Caco-2 (cell line): ENCODE measurements at regions of chr10 and their contacts with region 1.

Region 1: DNA sequence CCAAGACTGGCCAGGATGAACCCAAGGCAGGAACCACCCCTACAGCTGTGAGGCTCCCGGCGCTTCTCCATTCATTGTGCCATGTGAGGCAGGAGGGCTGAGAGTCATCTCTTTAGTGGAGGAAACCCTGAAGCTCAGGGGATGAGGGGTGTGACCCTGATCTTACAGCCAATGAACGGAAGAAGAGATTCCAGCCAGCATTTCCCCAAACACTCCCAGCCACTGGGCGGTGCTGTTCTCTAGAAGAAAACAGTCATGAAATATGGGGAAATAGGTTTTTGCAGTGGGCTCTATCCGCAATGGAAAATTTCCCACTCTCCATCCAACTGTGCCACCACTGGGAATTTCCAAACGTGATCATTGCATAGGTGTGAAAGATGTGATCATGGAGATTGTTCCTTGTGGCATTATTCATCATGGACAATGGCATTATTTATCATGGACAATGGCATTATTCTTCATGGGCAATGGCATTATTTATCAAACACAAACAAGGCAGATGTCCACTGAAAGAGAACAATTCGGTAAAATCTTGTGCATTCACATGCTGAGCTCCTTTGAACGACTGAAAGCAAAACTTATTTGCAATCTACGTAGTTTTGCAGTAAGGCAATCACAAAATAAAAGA is 14.0 kb upstream of the SLC18A2 start:
- DNase-seq: peak in 1 of 2 experiments; percentile 52
- H3K4me3 ChIP-seq: no peak overlapping the region
- H3K4me3 Mint-ChIP-seq: no peak overlapping the region
- H3K27ac Mint-ChIP-seq: no peak overlapping the region
- H3K4me1 ChIP-seq: no peaks in the 10 kb centered on the region
- H3K4me1 Mint-ChIP-seq: no peaks in the 10 kb centered on the region
- H3K27me3 ChIP-seq: no peaks in the 10 kb centered on the region; the same call in 1 of the 2 replicates
- H3K27me3 Mint-ChIP-seq: peaks cover 20% of the 10 kb centered on the region
- CTCF ChIP-seq: peak; percentile 33 to 87

Region 2: GRCh38 chr10:117152668-117153067 is 74.3 kb before region 1 on chr10:
- CTCF ChIA-PET with region 1: no interaction called
- POLR2A ChIA-PET with region 1: no interaction called
- intact Hi-C with region 1: no loop called
- DNase-seq: no peak
- H3K4me3 ChIP-seq: no peak overlapping the region
- H3K4me3 Mint-ChIP-seq: no peak overlapping the region
- H3K27ac Mint-ChIP-seq: no peak overlapping the region
- H3K4me1 ChIP-seq: no peaks in the 10 kb centered on the region
- H3K4me1 Mint-ChIP-seq: no peaks in the 10 kb centered on the region
- H3K27me3 ChIP-seq: no peaks in the 10 kb centered on the region
- H3K27me3 Mint-ChIP-seq: peaks cover 28% of the 10 kb centered on the region
- CTCF ChIP-seq: no peak

Region 3: DNA sequence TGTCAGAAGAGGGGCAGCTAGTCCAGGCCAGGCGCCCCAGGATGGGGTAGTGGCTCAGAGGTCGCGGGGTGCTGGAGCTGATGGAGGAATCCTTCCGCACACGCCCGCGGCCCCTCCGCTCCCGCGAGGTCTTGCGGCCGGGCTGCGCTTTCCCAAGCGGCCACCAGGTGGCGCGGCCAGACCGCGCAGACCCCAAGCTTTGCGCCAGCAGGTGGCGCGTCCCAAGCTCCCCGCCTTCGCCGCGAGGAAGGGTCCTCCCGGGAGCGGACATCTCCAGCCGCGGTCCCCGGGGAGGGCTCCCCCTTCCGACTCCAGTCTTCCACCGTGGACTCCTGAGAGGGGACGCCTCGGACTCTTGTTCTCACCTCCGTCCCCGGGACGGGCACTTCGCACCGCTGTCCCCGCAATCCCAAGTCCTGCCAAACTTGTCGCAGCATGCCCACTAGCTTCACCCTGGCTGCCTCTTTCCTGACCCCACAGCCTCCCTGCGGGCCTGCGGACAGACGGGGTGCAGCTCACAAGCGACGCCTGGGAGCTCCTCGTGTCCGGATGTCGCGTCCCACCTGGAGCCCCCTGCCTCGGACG is 10.2 kb before region 1 on chr10:
- CTCF ChIA-PET with region 1: interaction called, 18 read pairs
- POLR2A ChIA-PET with region 1: no interaction called
- intact Hi-C with region 1: no loop called
- DNase-seq: peak; percentile 77 to 90
- H3K4me3 ChIP-seq: peak overlapping the region; percentile 59
- H3K4me3 Mint-ChIP-seq: peak overlapping the region; percentile 90
- H3K27ac Mint-ChIP-seq: no peak overlapping the region
- H3K4me1 ChIP-seq: 0 out of 2 replicates have a peak, but pooled peaks cover 5% of the 10 kb centered on the region
- H3K4me1 Mint-ChIP-seq: no peaks in the 10 kb centered on the region
- H3K27me3 ChIP-seq: no peaks in the 10 kb centered on the region; the same call in 1 of the 2 replicates
- H3K27me3 Mint-ChIP-seq: peaks cover 13% of the 10 kb centered on the region
- CTCF ChIP-seq: peak; percentile 100

Region 4: GRCh38 chr10:117320050-117320665 is 93.2 kb after region 1 on chr10:
- CTCF ChIA-PET with region 1: interaction called, 8 read pairs
- POLR2A ChIA-PET with region 1: no interaction called
- intact Hi-C with region 1: loop called (anchors 1 kb)
- DNase-seq: peak in 1 of 2 experiments; percentile 36
- H3K4me3 ChIP-seq: no peak overlapping the region
- H3K4me3 Mint-ChIP-seq: no peak overlapping the region
- H3K27ac Mint-ChIP-seq: no peak overlapping the region
- H3K4me1 ChIP-seq: no peaks in the 10 kb centered on the region
- H3K4me1 Mint-ChIP-seq: no peaks in the 10 kb centered on the region
- H3K27me3 ChIP-seq: no peaks in the 10 kb centered on the region
- H3K27me3 Mint-ChIP-seq: no peaks in the 10 kb centered on the region
- CTCF ChIP-seq: peak; percentile 54 to 76

Region 5: DNA sequence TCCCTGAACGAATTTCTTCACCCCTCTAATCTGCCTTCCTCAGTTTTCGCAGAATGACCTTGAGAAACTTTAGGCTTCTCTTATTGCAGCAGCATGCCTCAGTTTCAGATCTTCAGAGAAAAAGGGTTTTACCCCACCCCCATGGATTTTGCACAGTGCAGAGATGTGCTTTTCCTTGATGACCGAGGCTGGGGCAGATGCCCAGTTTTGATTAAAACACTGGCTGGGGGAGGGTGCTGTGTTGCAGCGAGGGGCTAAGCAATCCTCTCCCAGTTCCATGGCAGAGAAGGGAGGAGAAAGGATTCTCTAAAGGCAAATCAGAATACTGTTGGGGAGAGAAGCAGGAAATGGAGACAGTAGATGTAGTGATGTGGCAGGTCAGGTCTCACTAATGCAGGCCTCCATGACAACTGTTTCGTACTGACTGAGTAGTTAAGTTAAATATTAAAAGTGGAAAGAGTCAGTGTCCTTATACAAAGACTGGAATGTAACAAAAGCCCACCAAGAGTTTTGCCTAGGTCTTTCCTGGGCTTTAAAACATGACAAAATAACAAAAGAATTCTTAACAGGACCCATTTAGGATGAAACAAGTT is 199.1 kb after region 1 on chr10:
- CTCF ChIA-PET with region 1: no interaction called
- POLR2A ChIA-PET with region 1: no interaction called
- intact Hi-C with region 1: loop called (anchors 10 kb)
- DNase-seq: peak in 1 of 2 experiments; percentile 30
- H3K4me3 ChIP-seq: no peak overlapping the region
- H3K4me3 Mint-ChIP-seq: peak overlapping the region; percentile 56
- H3K27ac Mint-ChIP-seq: peak overlapping the region; percentile 89
- H3K4me1 ChIP-seq: peaks cover 38% of the 10 kb centered on the region
- H3K4me1 Mint-ChIP-seq: peaks cover 21% of the 10 kb centered on the region
- H3K27me3 ChIP-seq: no peaks in the 10 kb centered on the region
- H3K27me3 Mint-ChIP-seq: no peaks in the 10 kb centered on the region
- CTCF ChIP-seq: no peak

Region 6: GRCh38 chr10:117477961-117478670 is 251.2 kb after region 1 on chr10:
- CTCF ChIA-PET with region 1: no interaction called
- POLR2A ChIA-PET with region 1: no interaction called
- intact Hi-C with region 1: loop called (anchors 2 kb)
- DNase-seq: peak in 1 of 2 experiments; percentile 29
- H3K4me3 ChIP-seq: no peak overlapping the region
- H3K4me3 Mint-ChIP-seq: no peak overlapping the region
- H3K27ac Mint-ChIP-seq: no peak overlapping the region
- H3K4me1 ChIP-seq: no peaks in the 10 kb centered on the region
- H3K4me1 Mint-ChIP-seq: peaks cover under 1% of the 10 kb centered on the region
- H3K27me3 ChIP-seq: no peaks in the 10 kb centered on the region
- H3K27me3 Mint-ChIP-seq: no peaks in the 10 kb centered on the region
- CTCF ChIP-seq: peak in 1 of 2 experiments; percentile 43

Region 7: GRCh38 chr10:117537436-117537903 is 310.5 kb after region 1 on chr10:
- CTCF ChIA-PET with region 1: no interaction called
- POLR2A ChIA-PET with region 1: no interaction called
- intact Hi-C with region 1: no loop called
- DNase-seq: peak in 1 of 2 experiments; percentile 39
- H3K4me3 ChIP-seq: no peak overlapping the region
- H3K4me3 Mint-ChIP-seq: no peak overlapping the region
- H3K27ac Mint-ChIP-seq: no peak overlapping the region
- H3K4me1 ChIP-seq: peaks cover 18% of the 10 kb centered on the region
- H3K4me1 Mint-ChIP-seq: peaks cover 6% of the 10 kb centered on the region
- H3K27me3 ChIP-seq: no peaks in the 10 kb centered on the region
- H3K27me3 Mint-ChIP-seq: no peaks in the 10 kb centered on the region
- CTCF ChIP-seq: no peak